ENCODE measurements at regions of chr2 and their contacts with region 1.

Region 1: GRCh38 chr2:88880441-88880953 is 189.0 kb downstream of the RPIA start:
- DNase-seq: peak; percentile 23
- ATAC-seq: peak; percentile 74
- H3K4me3 Mint-ChIP-seq: no peak overlapping the region
- H3K27ac Mint-ChIP-seq: no peak overlapping the region
- H3K4me1 Mint-ChIP-seq: peaks cover 7% of the 10 kb centered on the region
- H3K27me3 Mint-ChIP-seq: no peaks in the 10 kb centered on the region; the same call in 1 of the 2 replicates
- CTCF ChIP-seq: peak; percentile 61

Region 2: DNA sequence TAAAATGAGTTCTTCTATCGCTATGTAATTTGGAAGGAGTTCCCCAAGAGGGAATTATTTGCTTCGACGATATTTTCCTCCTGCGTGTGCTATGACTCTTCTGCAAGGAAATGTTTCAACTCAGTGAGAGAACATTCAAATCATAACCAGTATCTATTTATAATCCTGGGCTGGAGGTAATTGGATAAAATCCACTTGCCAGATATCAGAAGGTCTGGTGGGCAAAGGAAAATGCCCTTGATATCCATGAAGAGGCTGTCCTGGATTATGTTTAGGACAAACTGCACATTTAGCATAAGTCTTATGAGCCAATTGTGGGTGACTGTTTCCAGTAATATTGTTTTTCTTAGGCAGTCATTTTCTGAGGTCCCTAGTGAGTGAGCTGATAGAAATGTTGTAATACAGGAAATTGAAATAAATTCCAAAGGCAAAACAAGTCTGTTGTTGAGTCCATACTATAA is 171.3 kb before region 1 on chr2:
- CTCF ChIA-PET with region 1: no interaction called
- POLR2A ChIA-PET with region 1: no interaction called
- DNase-seq: no peak
- ATAC-seq: no peak
- H3K4me3 Mint-ChIP-seq: no peak overlapping the region
- H3K27ac Mint-ChIP-seq: no peak overlapping the region
- H3K4me1 Mint-ChIP-seq: peaks cover 31% of the 10 kb centered on the region
- H3K27me3 Mint-ChIP-seq: no peaks in the 10 kb centered on the region
- CTCF ChIP-seq: no peak

Region 3: GRCh38 chr2:88865801-88866371 is 14.6 kb before region 1 on chr2:
- CTCF ChIA-PET with region 1: interaction called, 12 read pairs
- POLR2A ChIA-PET with region 1: no interaction called
- DNase-seq: no peak
- ATAC-seq: no peak
- H3K4me3 Mint-ChIP-seq: no peak overlapping the region
- H3K27ac Mint-ChIP-seq: no peak overlapping the region
- H3K4me1 Mint-ChIP-seq: peaks cover 4% of the 10 kb centered on the region
- H3K27me3 Mint-ChIP-seq: no peaks in the 10 kb centered on the region
- CTCF ChIP-seq: no peak

Region 4: GRCh38 chr2:88897715-88898114 is 17.2 kb after region 1 on chr2:
- CTCF ChIA-PET with region 1: interaction called, 20 read pairs
- POLR2A ChIA-PET with region 1: no interaction called
- DNase-seq: no peak
- ATAC-seq: no peak
- H3K4me3 Mint-ChIP-seq: no peak overlapping the region
- H3K27ac Mint-ChIP-seq: no peak overlapping the region; the same call in 1 of the 2 replicates
- H3K4me1 Mint-ChIP-seq: no peaks in the 10 kb centered on the region
- H3K27me3 Mint-ChIP-seq: no peaks in the 10 kb centered on the region
- CTCF ChIP-seq: no peak

Region 5: GRCh38 chr2:88942798-88943197 is 62.3 kb after region 1 on chr2:
- CTCF ChIA-PET with region 1: interaction called, 18 read pairs
- POLR2A ChIA-PET with region 1: no interaction called
- DNase-seq: no peak
- ATAC-seq: no peak
- H3K4me3 Mint-ChIP-seq: no peak overlapping the region
- H3K27ac Mint-ChIP-seq: no peak overlapping the region
- H3K4me1 Mint-ChIP-seq: no peaks in the 10 kb centered on the region
- H3K27me3 Mint-ChIP-seq: no peaks in the 10 kb centered on the region
- CTCF ChIP-seq: no peak